ENCODE measurements at regions of chr4 and their contacts with region 1.

Region 1: DNA sequence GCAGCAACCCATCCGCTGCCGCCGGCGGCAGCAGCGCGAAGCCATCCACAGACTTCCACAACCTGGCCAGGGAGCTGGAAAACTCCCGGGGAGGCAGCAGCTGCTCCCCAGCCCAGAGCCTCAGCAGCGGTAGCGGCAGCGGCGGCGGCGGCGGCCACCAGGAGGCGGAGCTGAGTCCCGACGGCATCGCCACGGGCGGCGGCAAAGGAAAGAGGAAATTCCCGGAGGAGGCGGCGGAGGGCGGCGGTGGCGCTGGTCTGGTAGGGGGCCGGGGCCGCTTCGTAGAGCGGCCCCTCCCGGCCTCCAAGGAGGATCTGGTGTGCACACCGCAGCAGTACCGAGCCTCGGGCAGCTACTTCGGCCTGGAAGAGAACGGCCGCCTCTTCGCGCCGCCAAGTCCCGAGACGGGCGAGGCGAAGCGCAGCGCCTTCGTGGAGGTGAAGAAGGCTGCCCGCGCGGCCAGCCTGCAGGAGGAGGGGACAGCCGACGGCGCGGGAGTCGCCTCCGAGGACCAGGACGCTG is 4.9 kb downstream of the PRDM8 start:
- DNase-seq: peak in 34 of 35 experiments; percentile 51 to 87 (median 68)
- ATAC-seq: peak; percentile 61 to 73 (median 69)
- H3K4me3 ChIP-seq: peak overlapping the region; percentile 58 to 81
- H3K4me3 Mint-ChIP-seq: peak overlapping the region; percentile 71 to 90 (median 80)
- H3K27ac ChIP-seq: peak overlapping the region; percentile 81
- H3K27ac Mint-ChIP-seq: peak overlapping the region; percentile 72 to 76
- H3K4me1 ChIP-seq: peaks cover 5 to 27% of the 10 kb centered on the region in 2 experiments
- H3K4me1 Mint-ChIP-seq: peaks cover 25 to 27% (median 25%) of the 10 kb centered on the region in 3 donors
- H3K27me3 ChIP-seq: peaks cover 5 to 6% of the 10 kb centered on the region in 2 experiments
- H3K27me3 Mint-ChIP-seq: peaks cover 8 to 9% of the 10 kb centered on the region in 2 donors

Region 2: DNA sequence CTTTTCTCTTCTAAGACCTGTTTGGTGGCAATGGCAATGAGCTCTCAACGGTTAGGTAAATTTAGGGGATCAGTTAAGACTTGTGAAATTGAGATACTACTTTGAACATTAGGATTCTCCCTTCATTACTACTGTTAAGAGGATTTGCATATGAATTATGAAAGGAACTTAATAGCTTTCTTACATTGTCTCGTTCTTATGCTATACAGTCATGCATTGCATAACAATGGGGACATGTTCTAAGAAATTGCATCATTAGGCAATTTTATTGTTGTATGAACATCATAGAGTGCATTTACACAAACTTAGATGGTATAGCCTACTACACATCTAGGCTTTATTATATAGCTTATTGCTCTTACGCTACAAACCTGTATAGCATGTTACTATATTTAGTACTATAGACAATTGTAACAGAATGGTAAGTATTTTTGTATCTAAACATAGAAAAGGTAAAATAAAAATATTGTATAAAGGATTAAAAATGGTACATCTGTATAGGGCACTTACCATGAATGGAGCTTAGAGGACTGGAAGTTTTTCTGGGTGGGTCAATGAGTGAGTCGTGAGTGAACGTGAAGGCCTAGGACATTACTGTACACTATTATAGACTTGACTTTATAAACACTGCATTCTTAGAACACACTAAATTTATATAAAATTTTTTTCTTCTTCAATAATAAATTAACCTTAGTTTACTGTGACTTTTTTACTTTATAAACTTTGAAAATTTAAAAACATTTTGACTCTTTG is 1325.5 kb before region 1 on chr4:
- CTCF ChIA-PET with region 1: no interaction called
- POLR2A ChIA-PET with region 1: no interaction called
- DNase-seq: no peak
- ATAC-seq: no peak
- H3K4me3 ChIP-seq: no peak overlapping the region
- H3K4me3 Mint-ChIP-seq: no peak overlapping the region
- H3K27ac ChIP-seq: no peak overlapping the region
- H3K27ac Mint-ChIP-seq: no peak overlapping the region
- H3K4me1 ChIP-seq: no peaks in the 10 kb centered on the region
- H3K4me1 Mint-ChIP-seq: peaks cover 0 to 2% (median 0%) of the 10 kb centered on the region in 3 donors
- H3K27me3 ChIP-seq: no peaks in the 10 kb centered on the region
- H3K27me3 Mint-ChIP-seq: no peaks in the 10 kb centered on the region

Region 3: DNA sequence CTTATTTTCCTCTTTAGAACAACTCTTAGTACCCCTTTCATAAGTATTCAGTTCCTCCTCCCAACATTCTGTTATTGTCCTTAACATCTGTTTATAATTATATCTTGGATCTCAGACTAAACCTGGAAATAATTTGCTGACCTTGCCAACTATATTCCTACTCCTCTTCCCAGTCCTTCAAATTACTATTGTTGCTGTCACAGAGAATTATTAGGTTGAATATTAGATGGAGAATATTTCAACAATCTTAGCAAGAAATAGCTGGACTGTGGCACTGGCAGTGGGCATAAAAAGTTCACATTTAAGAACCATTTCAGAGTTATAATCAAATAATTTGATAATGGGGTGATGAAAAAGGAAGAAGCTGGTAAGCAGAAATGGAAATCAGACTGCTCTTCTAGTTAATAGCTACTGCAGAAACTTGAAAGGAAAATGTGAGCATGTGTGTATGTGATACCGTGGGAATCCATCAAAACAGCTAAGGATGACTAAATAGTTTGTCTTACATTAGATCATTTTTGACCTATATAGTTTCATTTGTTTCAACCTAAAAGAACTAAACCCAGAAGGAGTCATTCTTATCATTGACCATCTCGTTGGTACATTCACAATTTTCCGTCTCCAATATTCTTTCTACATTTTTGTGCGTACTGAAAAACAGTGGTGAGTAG is 48.2 kb before region 1 on chr4:
- CTCF ChIA-PET with region 1: no interaction called
- POLR2A ChIA-PET with region 1: interaction called in 1 of 2 experiments, 17 read pairs
- DNase-seq: no peak
- ATAC-seq: no peak
- H3K4me3 ChIP-seq: no peak overlapping the region
- H3K4me3 Mint-ChIP-seq: no peak overlapping the region
- H3K27ac ChIP-seq: no peak overlapping the region
- H3K27ac Mint-ChIP-seq: peak overlapping the region; percentile 2 to 59
- H3K4me1 ChIP-seq: no peaks in the 10 kb centered on the region
- H3K4me1 Mint-ChIP-seq: peaks cover 10 to 14% (median 12%) of the 10 kb centered on the region in 3 donors
- H3K27me3 ChIP-seq: no peaks in the 10 kb centered on the region
- H3K27me3 Mint-ChIP-seq: no peaks in the 10 kb centered on the region

Region 4: DNA sequence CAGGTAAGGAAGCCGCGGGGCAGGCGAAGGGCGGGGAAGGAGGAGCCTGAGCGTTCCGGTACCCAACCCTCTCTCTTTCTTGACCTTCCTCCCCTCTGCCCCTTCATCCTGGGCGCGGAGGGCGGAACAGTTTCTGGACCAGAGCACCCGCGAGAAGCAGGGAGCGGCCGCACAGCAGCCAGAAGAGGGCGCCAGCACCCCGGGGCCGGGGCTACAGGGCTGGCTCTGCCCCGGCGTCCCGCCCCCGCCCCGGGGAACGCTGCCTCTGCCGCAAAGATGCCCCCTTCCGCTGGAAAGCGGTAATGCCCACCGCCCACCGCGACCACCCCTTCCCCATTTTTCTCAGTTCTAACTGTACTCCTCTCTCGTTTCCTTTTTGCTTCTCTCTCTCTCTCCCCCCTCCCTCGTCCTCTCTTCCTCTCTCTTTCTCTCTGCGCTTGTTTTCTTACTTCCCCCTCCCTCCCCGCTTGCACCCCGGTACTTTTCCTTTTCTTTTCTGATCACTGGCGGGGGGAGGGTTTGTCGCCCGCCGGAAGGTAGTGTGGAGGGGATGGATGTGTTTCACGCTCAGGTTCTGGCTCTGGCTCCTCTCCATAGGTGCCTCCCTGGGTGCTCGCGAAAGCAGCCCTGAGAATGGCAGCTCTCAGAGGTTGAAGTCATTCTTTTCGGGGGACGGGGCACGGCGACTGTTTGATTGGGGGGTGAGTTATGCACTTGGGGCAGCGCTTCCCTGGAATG is 18.0 kb before region 1 on chr4:
- CTCF ChIA-PET with region 1: interaction called, 9 to 27 read pairs
- POLR2A ChIA-PET with region 1: interaction called in 1 of 2 experiments, 5 read pairs
- DNase-seq: peak; percentile 72 to 97 (median 89)
- ATAC-seq: peak; percentile 88 to 93 (median 90)
- H3K4me3 ChIP-seq: peak overlapping the region; percentile 76 to 97
- H3K4me3 Mint-ChIP-seq: peak overlapping the region; percentile 86 to 100 (median 99)
- H3K27ac ChIP-seq: peak overlapping the region; percentile 94
- H3K27ac Mint-ChIP-seq: peak overlapping the region; percentile 99
- H3K4me1 ChIP-seq: peaks cover 22 to 34% of the 10 kb centered on the region in 2 experiments
- H3K4me1 Mint-ChIP-seq: peaks cover 53 to 56% (median 54%) of the 10 kb centered on the region in 3 donors
- H3K27me3 ChIP-seq: peaks cover 0 to 4% of the 10 kb centered on the region in 2 experiments
- H3K27me3 Mint-ChIP-seq: peaks cover 0 to 3% of the 10 kb centered on the region in 2 donors

Region 5: GRCh38 chr4:80484712-80485111 is 282.5 kb after region 1 on chr4:
- CTCF ChIA-PET with region 1: no interaction called
- POLR2A ChIA-PET with region 1: no interaction called
- DNase-seq: no peak
- ATAC-seq: no peak
- H3K4me3 ChIP-seq: no peak overlapping the region
- H3K4me3 Mint-ChIP-seq: no peak overlapping the region
- H3K27ac ChIP-seq: no peak overlapping the region
- H3K27ac Mint-ChIP-seq: no peak overlapping the region
- H3K4me1 ChIP-seq: no peaks in the 10 kb centered on the region
- H3K4me1 Mint-ChIP-seq: peaks cover 8 to 13% (median 9%) of the 10 kb centered on the region in 3 donors
- H3K27me3 ChIP-seq: no peaks in the 10 kb centered on the region
- H3K27me3 Mint-ChIP-seq: no peaks in the 10 kb centered on the region